CD14-positive monocyte (primary cell): ENCODE measurements at regions of chr14 and their contacts with region 1.

Region 1: GRCh38 chr14:92951912-92952471 is 29.0 kb downstream of the CHGA start:
- DNase-seq: peak; percentile 60 to 71 (median 64)
- H3K4me3 ChIP-seq: no peak overlapping the region
- H3K4me3 Mint-ChIP-seq: no peak overlapping the region
- H3K27ac ChIP-seq: no peak overlapping the region
- H3K27ac Mint-ChIP-seq: peak overlapping the region in 4 of 7 donors; percentile 5 to 68 (median 42)
- H3K4me1 ChIP-seq: no peaks in the 10 kb centered on the region
- H3K4me1 Mint-ChIP-seq: no peaks in the 10 kb centered on the region
- H3K27me3 ChIP-seq: no peaks in the 10 kb centered on the region
- H3K27me3 Mint-ChIP-seq: no peaks in the 10 kb centered on the region
- CTCF ChIP-seq: peak; percentile 91

Region 2: GRCh38 chr14:92922883-92923743 is 28.9 kb before region 1 on chr14 and contains the start of gene CHGA:
- intact Hi-C with region 1: no loop called
- DNase-seq: peak; percentile 15 to 40 (median 28)
- H3K4me3 ChIP-seq: no peak within 1 kb of the TSS
- H3K4me3 Mint-ChIP-seq: peak within 1 kb of the TSS; percentile 16 to 71
- H3K27ac ChIP-seq: no peak within 1 kb of the TSS
- H3K27ac Mint-ChIP-seq: no peak within 1 kb of the TSS
- H3K4me1 ChIP-seq: no peaks in the 10 kb centered on the region
- H3K4me1 Mint-ChIP-seq: no peaks in the 10 kb centered on the region
- H3K27me3 ChIP-seq: peaks cover 5 to 15% of the 10 kb centered on the region in 2 donors
- H3K27me3 Mint-ChIP-seq: peaks cover 16 to 45% (median 36%) of the 10 kb centered on the region in 3 donors
- CTCF ChIP-seq: no peak
- polyA plus RNA-seq, gene CHGA: not detected

Region 3: DNA sequence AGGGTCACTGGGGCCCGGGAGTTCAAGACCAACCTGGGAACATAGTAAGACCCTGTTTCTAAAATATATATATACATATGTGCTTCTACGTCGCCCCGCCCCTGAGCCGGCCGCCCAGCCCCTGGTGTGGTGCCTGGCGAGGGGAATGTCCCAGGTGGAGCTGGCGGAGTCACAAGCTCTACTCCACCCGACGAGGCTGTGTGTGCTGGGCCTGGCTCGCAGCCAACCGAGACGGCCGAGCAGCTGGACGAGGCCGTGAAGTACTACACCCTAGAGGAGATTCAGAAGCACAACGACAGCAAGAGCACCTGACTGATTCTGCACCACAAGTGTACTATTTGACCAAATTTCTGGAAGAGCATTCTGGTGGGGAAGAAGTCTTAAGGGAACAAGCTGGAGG is 185.9 kb after region 1 on chr14:
- intact Hi-C with region 1: loop called (anchors 1 to 2 kb)
- DNase-seq: no peak
- H3K4me3 ChIP-seq: no peak overlapping the region
- H3K4me3 Mint-ChIP-seq: no peak overlapping the region
- H3K27ac ChIP-seq: no peak overlapping the region
- H3K27ac Mint-ChIP-seq: peak overlapping the region in 1 of 7 donors; percentile 6
- H3K4me1 ChIP-seq: peaks cover 42 to 43% of the 10 kb centered on the region in 2 donors
- H3K4me1 Mint-ChIP-seq: peaks cover 39% of the 10 kb centered on the region
- H3K27me3 ChIP-seq: no peaks in the 10 kb centered on the region
- H3K27me3 Mint-ChIP-seq: peaks cover 0 to 3% (median 1%) of the 10 kb centered on the region in 3 donors
- CTCF ChIP-seq: no peak

Region 4: GRCh38 chr14:93173943-93174395 is 222.0 kb after region 1 on chr14:
- intact Hi-C with region 1: loop called in 1 of 2 experiments (anchors 10 kb)
- DNase-seq: no peak
- H3K4me3 ChIP-seq: no peak overlapping the region
- H3K4me3 Mint-ChIP-seq: peak overlapping the region in 1 of 2 donors; percentile 1
- H3K27ac ChIP-seq: no peak overlapping the region
- H3K27ac Mint-ChIP-seq: no peak overlapping the region
- H3K4me1 ChIP-seq: no peaks in the 10 kb centered on the region
- H3K4me1 Mint-ChIP-seq: peaks cover 2% of the 10 kb centered on the region
- H3K27me3 ChIP-seq: no peaks in the 10 kb centered on the region
- H3K27me3 Mint-ChIP-seq: peaks cover 0 to 4% (median 3%) of the 10 kb centered on the region in 3 donors
- CTCF ChIP-seq: no peak

Region 5: GRCh38 chr14:93220509-93220908 is 268.5 kb after region 1 on chr14:
- intact Hi-C with region 1: loop called in 1 of 2 experiments (anchors 5 kb)
- DNase-seq: no peak
- H3K4me3 ChIP-seq: no peak overlapping the region
- H3K4me3 Mint-ChIP-seq: no peak overlapping the region
- H3K27ac ChIP-seq: no peak overlapping the region
- H3K27ac Mint-ChIP-seq: no peak overlapping the region
- H3K4me1 ChIP-seq: no peaks in the 10 kb centered on the region
- H3K4me1 Mint-ChIP-seq: no peaks in the 10 kb centered on the region
- H3K27me3 ChIP-seq: no peaks in the 10 kb centered on the region
- H3K27me3 Mint-ChIP-seq: no peaks in the 10 kb centered on the region
- CTCF ChIP-seq: no peak

Region 6: GRCh38 chr14:93892923-93893558 is 941.0 kb after region 1 on chr14:
- intact Hi-C with region 1: loop called in 1 of 2 experiments (anchors 5 kb)
- DNase-seq: peak; percentile 21 to 43 (median 38)
- H3K4me3 ChIP-seq: no peak overlapping the region
- H3K4me3 Mint-ChIP-seq: no peak overlapping the region
- H3K27ac ChIP-seq: no peak overlapping the region
- H3K27ac Mint-ChIP-seq: no peak overlapping the region
- H3K4me1 ChIP-seq: no peaks in the 10 kb centered on the region
- H3K4me1 Mint-ChIP-seq: no peaks in the 10 kb centered on the region
- H3K27me3 ChIP-seq: peaks cover 0 to 3% of the 10 kb centered on the region in 2 donors
- H3K27me3 Mint-ChIP-seq: peaks cover 11 to 18% (median 12%) of the 10 kb centered on the region in 3 donors
- CTCF ChIP-seq: peak; percentile 100